Activated CD4-positive, alpha-beta T cell treated with anti-CD3 and anti-CD28 coated beads, Interleukin-2, amount 10 ng/mL, durations not matched to agents 7 days and 5 days (primary cell): ENCODE measurements at regions of chr21 and their contacts with region 1.

Region 1: GRCh38 chr21:31117128-31117916 is 79.0 kb upstream of the KRTAP19-8 start:
- DNase-seq: no peak
- H3K4me3 Mint-ChIP-seq: no peak overlapping the region
- H3K27ac Mint-ChIP-seq: no peak overlapping the region
- H3K4me1 Mint-ChIP-seq: peaks cover 25% of the 10 kb centered on the region
- H3K27me3 Mint-ChIP-seq: no peaks in the 10 kb centered on the region

Region 2: GRCh38 chr21:30958741-30959140 is 158.6 kb before region 1 on chr21:
- CTCF ChIA-PET with region 1: no interaction called
- POLR2A ChIA-PET with region 1: no interaction called
- DNase-seq: no peak
- H3K4me3 Mint-ChIP-seq: no peak overlapping the region
- H3K27ac Mint-ChIP-seq: no peak overlapping the region
- H3K4me1 Mint-ChIP-seq: no peaks in the 10 kb centered on the region
- H3K27me3 Mint-ChIP-seq: peaks cover 3% of the 10 kb centered on the region

Region 3: GRCh38 chr21:31132574-31133242 is 15.4 kb after region 1 on chr21:
- CTCF ChIA-PET with region 1: interaction called, 10 read pairs
- POLR2A ChIA-PET with region 1: interaction called, 3 read pairs
- DNase-seq: peak; percentile 87
- H3K4me3 Mint-ChIP-seq: peak overlapping the region; percentile 69
- H3K27ac Mint-ChIP-seq: peak overlapping the region; percentile 94
- H3K4me1 Mint-ChIP-seq: peaks cover 64% of the 10 kb centered on the region
- H3K27me3 Mint-ChIP-seq: no peaks in the 10 kb centered on the region